Heart right ventricle (tissue), 16 donors: ENCODE measurements at regions of chr22 and their contacts with region 1.

Region 1: GRCh38 chr22:38230108-38230825 is 28.5 kb downstream of the MAFF start:
- DNase-seq: peak in 1 of 2 donors; percentile 43
- ATAC-seq: peak in 4 of 8 donors; percentile 14 to 18 (median 16)
- H3K4me3 ChIP-seq: no peak overlapping the region
- H3K27ac ChIP-seq: peak overlapping the region in 8 of 10 donors; percentile 40 to 75 (median 55)
- H3K4me1 ChIP-seq: peaks cover 11 to 70% (median 26%) of the 10 kb centered on the region in 9 donors
- H3K27me3 ChIP-seq: no peaks in the 10 kb centered on the region
- CTCF ChIP-seq: peak in 8 of 9 donors; percentile 25 to 54 (median 46)

Region 2: GRCh38 chr22:38272373-38273134 is 42.3 kb after region 1 on chr22 and contains the start of gene TMEM184B:
- intact Hi-C with region 1: loop called in 1 of 10 experiments (anchors 5 kb)
- DNase-seq: peak; percentile 71 to 84
- ATAC-seq: peak; percentile 86 to 97 (median 92)
- H3K4me3 ChIP-seq: peak within 1 kb of the TSS; percentile 87 to 100 (median 96)
- H3K27ac ChIP-seq: peak within 1 kb of the TSS; percentile 89 to 99 (median 97)
- H3K4me1 ChIP-seq: peaks cover 22 to 61% (median 51%) of the 10 kb centered on the region in 9 donors
- H3K27me3 ChIP-seq: no peaks in the 10 kb centered on the region
- CTCF ChIP-seq: no peak
- total RNA-seq, gene TMEM184B: 36.2 to 51.6 (median 46.1) TPM